ENCODE measurements at regions of chr17 and their contacts with region 1.

Region 1: DNA sequence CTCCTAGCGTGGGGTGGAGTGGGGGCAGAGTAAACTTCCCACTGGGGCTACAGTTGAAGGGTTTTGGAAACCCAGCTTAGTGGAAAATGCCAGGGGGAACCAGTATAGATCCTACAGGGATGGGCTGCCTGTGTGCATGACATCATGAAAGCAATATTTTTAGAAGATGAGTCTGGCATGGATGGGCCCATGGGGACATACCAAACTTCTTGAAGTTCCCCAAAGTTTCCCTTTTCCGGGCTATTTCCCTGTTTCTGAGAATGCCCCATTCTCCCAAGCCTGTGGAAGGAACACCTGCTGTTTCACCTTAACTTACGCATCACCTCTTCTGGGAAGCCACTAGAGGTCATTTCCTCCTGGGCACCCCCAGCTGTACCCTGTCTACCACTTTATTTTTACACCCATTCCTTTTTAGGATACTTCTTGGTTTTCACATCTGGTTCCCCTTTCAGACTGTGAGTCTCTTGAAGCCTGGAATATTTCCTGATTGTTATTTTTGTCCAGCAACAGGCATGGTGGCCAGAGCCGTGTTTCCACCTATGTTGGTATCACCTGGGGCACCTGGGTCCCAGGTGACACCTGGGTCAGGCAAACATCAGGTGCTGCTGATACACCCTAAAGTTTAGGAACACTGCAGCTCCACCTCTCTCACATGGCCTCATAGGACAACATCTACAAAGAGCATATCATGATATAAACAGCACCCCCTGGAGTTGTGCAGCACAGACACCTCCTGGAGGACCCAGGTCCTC is 9.8 kb downstream of the SOCS3 start:
- DNase-seq: no peak
- H3K4me3 ChIP-seq: no peak overlapping the region
- H3K27ac ChIP-seq: no peak overlapping the region
- H3K4me1 ChIP-seq: peaks cover 8% of the 10 kb centered on the region
- H3K27me3 ChIP-seq: no peaks in the 10 kb centered on the region
- CTCF ChIP-seq: no peak
- EP300 ChIP-seq: no peak
- POLR2A ChIP-seq: no peak

Region 2: DNA sequence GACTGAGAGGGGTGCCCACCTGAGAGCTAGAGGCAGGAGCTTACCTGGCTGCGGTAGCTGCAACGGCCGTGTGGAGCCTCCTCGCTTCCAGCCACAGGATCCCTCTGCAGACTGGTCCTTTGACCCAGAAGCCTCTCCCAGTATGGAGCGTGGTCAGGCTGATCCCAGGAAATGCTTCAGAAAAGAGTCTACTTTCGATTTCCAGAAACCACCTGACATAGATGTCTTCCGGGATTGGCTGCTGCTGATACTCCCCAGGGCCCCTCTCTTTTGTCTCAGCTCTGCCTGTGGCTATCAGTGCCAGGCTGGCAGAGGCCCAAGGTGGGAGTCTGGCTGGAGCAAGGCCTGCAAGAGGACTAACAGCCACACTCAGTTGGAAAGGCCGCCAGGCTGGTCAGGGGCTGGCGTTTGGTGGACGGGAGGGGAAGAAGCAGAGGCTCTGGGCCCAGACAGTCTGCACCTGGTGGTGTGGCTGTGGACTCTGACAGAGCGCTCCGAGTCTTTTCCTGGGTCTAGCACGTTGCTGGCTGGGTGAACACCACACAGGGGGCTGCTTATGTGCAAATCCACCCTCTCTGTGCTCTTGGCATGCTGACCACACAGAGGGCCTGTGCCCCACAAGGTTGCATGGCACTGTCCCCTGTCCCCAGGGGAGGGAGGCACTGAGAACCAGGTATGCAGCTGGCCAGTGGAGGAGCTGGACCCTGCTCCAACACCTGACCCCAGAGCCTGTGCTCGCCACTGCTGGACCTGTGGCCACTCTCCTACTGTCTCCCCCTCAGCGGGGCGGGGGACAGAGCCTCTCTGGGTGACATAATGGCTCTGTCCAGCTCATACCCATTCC is 629.9 kb after region 1 on chr17 and contains the start of gene LGALS3BP:
- intact Hi-C with region 1: loop called in 1 of 4 experiments (anchors 5 kb)
- DNase-seq: peak; percentile 84 to 94 (median 90)
- H3K4me3 ChIP-seq: peak within 1 kb of the TSS; percentile 51
- H3K27ac ChIP-seq: peak within 1 kb of the TSS; percentile 60 to 75
- H3K4me1 ChIP-seq: peaks cover 34% of the 10 kb centered on the region
- H3K27me3 ChIP-seq: no peaks in the 10 kb centered on the region
- CTCF ChIP-seq: no peak
- EP300 ChIP-seq: no peak
- POLR2A ChIP-seq: no peak
- total RNA-seq, gene LGALS3BP: 191 to 584 (median 250) TPM

Measured in ovary (tissue), 10 donors.